ENCODE measurements at regions of chr3 and their contacts with region 1.

Region 1: DNA sequence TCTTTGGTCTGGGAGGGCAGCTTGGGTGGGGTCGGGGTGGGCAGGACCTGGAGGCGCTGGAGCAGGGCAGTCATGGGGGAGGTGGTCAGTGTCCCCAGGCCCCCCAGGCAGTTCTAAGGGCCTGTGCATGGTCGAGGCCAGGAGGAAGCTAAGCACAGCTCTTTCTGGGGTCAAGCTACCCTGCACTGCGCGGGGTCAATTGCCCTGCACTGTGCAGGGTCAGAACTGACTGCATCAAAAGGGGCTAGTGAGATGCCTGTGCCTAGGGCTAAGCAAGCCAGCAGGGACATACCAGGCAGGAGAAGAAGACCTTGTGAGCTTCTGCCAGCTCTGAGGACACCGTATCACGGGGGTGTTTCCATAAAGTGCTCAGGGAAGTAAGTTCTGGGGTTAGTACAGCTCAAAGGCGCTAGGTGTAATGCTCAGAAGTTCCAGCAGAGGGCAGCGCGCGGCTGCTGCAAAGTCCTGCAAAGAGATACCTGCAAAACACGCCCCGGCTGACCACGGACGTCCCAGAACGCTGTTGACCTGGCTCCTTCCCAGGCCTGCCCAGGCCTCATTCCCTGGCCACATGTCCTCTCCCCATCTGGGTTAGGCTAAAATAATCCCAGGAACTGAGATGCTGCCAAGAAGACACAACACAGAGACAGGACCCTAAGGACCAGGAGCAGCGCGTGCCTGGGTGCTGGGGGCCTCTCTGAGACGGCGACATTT is 18.8 kb upstream of the IQSEC1 start:
- DNase-seq: peak; percentile 93
- ATAC-seq: peak; percentile 83

Region 2: DNA sequence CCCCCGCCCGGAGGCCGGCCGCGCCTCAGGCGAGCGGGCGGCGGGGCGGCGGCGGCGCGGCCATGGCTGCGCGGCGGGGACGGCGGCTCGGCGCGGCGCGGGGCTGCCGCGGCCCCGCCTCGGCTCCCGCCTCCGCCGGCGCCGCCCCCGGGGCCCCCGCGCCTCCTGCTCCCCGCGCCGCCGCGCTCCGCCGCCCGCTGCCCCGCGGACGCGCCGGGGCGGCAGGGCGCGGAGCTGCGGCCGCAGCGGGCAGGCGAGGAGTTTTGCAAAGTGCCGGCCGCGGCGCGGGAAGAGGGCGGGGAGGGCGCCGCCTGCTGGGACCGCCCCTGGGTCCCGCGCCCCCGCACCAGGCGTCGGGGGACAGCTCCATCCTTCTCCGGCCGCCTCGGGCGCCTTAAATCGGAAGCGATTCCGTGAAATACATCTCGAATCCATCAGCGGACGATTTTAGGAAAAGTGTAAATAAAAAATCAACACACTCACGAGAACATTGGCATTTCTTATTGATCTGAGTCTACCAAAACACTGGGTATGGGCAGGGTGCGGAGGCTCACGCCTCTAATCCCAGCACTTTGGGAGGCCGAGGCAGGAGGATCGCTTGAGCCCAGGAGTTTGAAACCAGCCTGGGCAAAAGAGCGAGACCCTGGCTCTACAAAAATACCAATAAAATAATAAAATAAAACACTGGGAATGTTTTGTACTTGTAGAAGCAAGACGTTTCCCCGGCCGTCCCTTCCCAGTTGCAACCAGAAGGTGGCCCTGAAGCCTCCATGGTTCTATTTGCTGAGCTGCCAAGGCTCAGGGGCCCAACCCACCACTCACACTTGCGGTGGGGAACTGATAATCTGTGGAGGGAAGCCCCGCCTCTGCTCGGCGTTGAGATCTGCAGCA is 191.2 kb after region 1 on chr3:
- intact Hi-C with region 1: loop called (anchors 2 kb)
- DNase-seq: no peak
- ATAC-seq: peak; percentile 43

Region 3: GRCh38 chr3:13452490-13453335 is 360.7 kb after region 1 on chr3:
- intact Hi-C with region 1: loop called (anchors 1 kb)
- DNase-seq: no peak
- ATAC-seq: peak; percentile 40

Region 4: GRCh38 chr3:13648060-13649001 is 556.3 kb after region 1 on chr3:
- intact Hi-C with region 1: loop called (anchors 2 kb)
- DNase-seq: peak; percentile 83
- ATAC-seq: peak; percentile 75

Measured in Right ventricle myocardium inferior (tissue), 1 donor.